WTC11 (cell line): ENCODE measurements at regions of chr14 and their contacts with region 1.

Region 1: GRCh38 chr14:67426983-67427606 is 15.1 kb upstream of the PLEK2 start:
- DNase-seq: peak; percentile 85
- ATAC-seq: peak; percentile 95
- H3K4me3 Mint-ChIP-seq: peak overlapping the region; percentile 20; the same call in 1 of the 2 replicates
- H3K27ac Mint-ChIP-seq: no peak overlapping the region
- H3K4me1 Mint-ChIP-seq: peaks cover 12% of the 10 kb centered on the region
- H3K27me3 Mint-ChIP-seq: peaks cover 3% of the 10 kb centered on the region; the same call in 1 of the 2 replicates
- CTCF ChIP-seq: peak; percentile 75

Region 2: DNA sequence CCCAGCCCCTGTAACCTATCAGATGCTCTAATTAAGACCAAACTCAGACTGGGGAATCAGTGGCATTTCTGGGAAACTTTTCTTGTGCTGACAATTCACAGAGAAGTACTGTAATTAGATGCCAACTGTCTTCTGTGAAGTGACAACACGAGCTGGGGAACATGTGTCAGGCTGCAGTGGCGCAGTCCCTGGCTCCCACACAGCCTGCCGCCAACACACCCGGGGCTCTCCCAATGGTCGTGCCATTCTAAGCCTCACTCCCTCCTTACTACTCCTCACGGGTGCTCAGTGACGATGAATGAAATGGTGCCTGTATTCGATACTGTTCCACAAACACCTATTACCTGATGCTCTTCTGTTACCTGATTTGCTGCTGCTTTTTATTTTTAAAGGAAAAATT is 219.3 kb before region 1 on chr14:
- CTCF ChIA-PET with region 1: no interaction called
- POLR2A ChIA-PET with region 1: no interaction called
- DNase-seq: no peak
- ATAC-seq: no peak
- H3K4me3 Mint-ChIP-seq: no peak overlapping the region
- H3K27ac Mint-ChIP-seq: no peak overlapping the region
- H3K4me1 Mint-ChIP-seq: no peaks in the 10 kb centered on the region
- H3K27me3 Mint-ChIP-seq: no peaks in the 10 kb centered on the region
- CTCF ChIP-seq: no peak

Region 3: GRCh38 chr14:67352055-67352454 is 75.0 kb before region 1 on chr14:
- CTCF ChIA-PET with region 1: no interaction called
- POLR2A ChIA-PET with region 1: no interaction called
- DNase-seq: no peak
- ATAC-seq: no peak
- H3K4me3 Mint-ChIP-seq: no peak overlapping the region
- H3K27ac Mint-ChIP-seq: no peak overlapping the region
- H3K4me1 Mint-ChIP-seq: no peaks in the 10 kb centered on the region
- H3K27me3 Mint-ChIP-seq: no peaks in the 10 kb centered on the region
- CTCF ChIP-seq: no peak

Region 4: GRCh38 chr14:67377916-67378315 is 49.2 kb before region 1 on chr14:
- CTCF ChIA-PET with region 1: no interaction called
- POLR2A ChIA-PET with region 1: no interaction called
- DNase-seq: no peak
- ATAC-seq: no peak
- H3K4me3 Mint-ChIP-seq: no peak overlapping the region
- H3K27ac Mint-ChIP-seq: no peak overlapping the region
- H3K4me1 Mint-ChIP-seq: no peaks in the 10 kb centered on the region
- H3K27me3 Mint-ChIP-seq: no peaks in the 10 kb centered on the region
- CTCF ChIP-seq: no peak

Region 5: DNA sequence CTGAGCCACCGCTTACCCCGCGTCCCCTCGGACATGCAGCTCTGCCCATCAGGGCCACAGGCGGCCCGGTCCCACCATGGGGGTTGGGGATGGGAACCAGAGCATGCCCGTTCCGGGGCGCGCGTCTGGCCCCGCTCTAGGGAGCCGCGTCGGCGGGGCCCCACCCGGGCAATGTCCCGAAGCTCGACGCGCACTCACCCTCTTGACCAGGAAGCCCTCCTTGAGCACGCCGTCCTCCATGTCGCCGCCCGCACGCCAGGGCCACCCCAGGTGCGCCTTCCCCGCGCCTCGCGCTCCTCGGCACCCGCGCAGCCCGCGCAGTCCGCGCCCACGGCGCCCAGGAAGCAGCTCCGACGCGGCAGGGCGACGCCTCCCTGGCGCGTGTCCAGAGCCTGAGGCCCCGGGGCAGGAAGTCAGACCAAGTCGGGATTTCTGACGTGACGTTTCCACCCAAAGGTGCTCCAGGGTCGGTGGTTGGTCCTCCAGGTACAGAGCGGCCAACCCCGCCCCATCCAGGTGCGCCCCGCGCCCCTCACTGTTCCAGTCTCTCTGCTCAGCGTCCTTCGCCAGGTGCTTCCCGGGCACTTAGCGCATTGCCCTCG is 15.2 kb before region 1 on chr14 and contains the start of gene PLEK2:
- CTCF ChIA-PET with region 1: interaction called, 17 read pairs
- POLR2A ChIA-PET with region 1: no interaction called
- DNase-seq: peak; percentile 42
- ATAC-seq: peak; percentile 74
- H3K4me3 Mint-ChIP-seq: peak within 1 kb of the TSS; percentile 70
- H3K27ac Mint-ChIP-seq: no peak within 1 kb of the TSS
- H3K4me1 Mint-ChIP-seq: peaks cover 10% of the 10 kb centered on the region
- H3K27me3 Mint-ChIP-seq: peaks cover 41% of the 10 kb centered on the region
- CTCF ChIP-seq: no peak
- total RNA-seq, gene PLEK2: 1.2 to 1.4 TPM (median 1.3 TPM) in 3 replicates

Region 6: DNA sequence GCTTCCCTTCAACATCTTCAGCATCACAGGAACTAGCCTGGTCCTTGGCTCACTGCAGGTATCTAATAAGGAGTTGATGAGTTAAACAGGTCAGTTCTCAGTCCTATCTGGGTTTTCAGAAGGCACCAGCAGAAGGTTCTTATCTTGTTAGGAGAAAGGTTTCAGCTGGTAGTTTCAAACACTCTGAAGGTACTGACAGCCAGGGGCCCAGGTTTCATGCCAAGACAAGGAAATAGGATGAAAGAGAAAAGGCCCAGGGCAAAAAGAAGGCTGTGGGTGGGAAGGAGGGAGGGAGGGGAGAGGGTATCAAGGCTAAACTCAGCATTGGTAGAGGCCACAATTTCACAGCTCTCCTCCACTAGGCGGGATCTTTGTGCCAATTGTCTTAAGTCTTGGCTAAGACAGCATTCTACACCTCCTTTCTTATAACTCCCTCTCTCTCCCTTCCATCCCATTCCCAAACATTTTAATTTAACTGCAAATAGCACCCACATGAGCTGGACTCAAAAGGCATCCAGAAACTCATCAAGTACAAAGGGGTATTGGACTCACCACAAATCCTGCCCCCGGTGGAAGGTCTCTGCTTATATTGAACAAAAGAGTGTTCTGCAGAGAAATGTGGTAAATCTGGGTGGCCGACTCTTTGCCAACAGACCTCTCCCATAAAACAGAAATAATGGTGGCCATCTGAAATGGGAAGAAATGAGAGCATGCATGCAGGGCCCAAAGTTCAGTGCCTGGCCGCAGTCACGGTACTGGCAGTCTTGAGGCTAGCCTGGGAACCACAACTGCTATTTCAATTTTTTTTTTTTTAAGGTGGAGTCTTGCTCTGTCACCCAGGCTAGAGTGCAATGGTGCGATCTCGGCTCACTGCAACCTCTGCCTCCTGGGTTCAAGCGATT is 40.3 kb after region 1 on chr14:
- CTCF ChIA-PET with region 1: interaction called, 37 read pairs
- POLR2A ChIA-PET with region 1: no interaction called
- DNase-seq: no peak
- ATAC-seq: peak; percentile 44; the same call in 1 of the 2 replicates
- H3K4me3 Mint-ChIP-seq: no peak overlapping the region
- H3K27ac Mint-ChIP-seq: no peak overlapping the region
- H3K4me1 Mint-ChIP-seq: no peaks in the 10 kb centered on the region
- H3K27me3 Mint-ChIP-seq: no peaks in the 10 kb centered on the region; the same call in 1 of the 2 replicates
- CTCF ChIP-seq: no peak

Region 7: GRCh38 chr14:67514650-67515385 is 87.7 kb after region 1 on chr14:
- CTCF ChIA-PET with region 1: interaction called, 62 read pairs
- POLR2A ChIA-PET with region 1: interaction called, 3 read pairs
- DNase-seq: peak; percentile 32
- ATAC-seq: peak; percentile 57
- H3K4me3 Mint-ChIP-seq: peak overlapping the region; percentile 80
- H3K27ac Mint-ChIP-seq: no peak overlapping the region
- H3K4me1 Mint-ChIP-seq: peaks cover 21% of the 10 kb centered on the region
- H3K27me3 Mint-ChIP-seq: peaks cover 77% of the 10 kb centered on the region
- CTCF ChIP-seq: no peak

Region 8: DNA sequence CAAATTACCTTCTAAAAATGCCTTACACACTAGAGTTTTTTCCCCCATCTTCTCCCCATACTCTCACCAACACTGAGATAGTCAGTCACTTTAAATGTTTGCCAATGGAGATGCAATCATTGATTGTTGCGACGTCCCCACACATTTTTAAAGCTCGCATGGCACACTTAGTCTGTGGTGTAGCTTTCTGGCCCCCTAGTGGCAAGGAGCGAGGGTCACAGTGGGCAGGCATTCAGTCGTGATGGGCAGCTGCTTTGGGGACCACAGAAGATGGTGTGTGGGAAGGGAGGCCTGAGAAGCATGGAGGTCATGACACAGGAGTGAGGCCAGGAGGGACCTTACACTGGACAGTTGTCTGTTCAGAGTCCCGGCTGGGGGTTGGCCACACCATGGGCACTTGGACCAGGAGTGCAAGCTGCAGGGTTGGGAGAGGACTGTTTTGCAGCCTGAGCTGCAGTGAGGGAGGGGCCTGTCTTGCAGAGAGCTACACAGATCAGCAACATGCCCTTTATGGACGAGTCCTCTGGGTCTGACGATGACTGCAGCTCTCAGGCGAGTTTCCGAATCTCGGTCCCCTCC is 144.3 kb after region 1 on chr14:
- CTCF ChIA-PET with region 1: interaction called, 117 read pairs
- POLR2A ChIA-PET with region 1: no interaction called
- DNase-seq: peak; percentile 72
- ATAC-seq: peak; percentile 85
- H3K4me3 Mint-ChIP-seq: no peak overlapping the region
- H3K27ac Mint-ChIP-seq: no peak overlapping the region
- H3K4me1 Mint-ChIP-seq: peaks cover 9% of the 10 kb centered on the region
- H3K27me3 Mint-ChIP-seq: no peaks in the 10 kb centered on the region
- CTCF ChIP-seq: peak; percentile 85

Region 9: DNA sequence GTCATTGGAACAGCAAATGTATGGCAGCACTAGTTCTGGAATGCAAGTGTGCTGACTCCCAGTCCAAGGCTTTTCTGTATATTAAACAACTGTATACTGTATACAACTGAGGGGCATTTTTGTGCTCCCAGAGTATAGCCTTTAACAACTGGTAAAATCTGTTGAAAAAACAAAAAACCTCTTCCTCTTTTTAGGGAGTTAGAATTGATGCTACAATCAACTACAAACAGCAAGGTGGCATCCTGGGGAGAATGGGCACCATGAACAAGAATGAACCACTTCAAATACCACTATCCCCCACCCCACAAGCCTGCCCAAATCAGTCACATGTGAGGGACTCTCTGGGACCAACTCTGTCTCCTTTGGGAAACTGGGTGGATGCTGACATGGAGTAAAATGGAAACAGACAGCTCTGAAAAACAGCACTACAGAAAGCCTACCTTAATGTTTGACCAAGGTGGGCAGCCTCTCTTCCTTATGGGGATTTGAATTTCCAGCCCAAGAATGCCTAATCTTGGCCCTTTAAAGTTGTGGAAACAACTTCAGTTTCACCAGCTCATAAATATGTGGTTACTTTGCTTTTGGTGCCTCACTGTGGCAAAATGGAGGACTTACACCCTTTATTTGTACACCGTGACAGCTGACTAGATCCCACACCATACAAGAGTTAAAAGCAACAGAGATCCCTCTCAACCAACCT is 239.8 kb after region 1 on chr14:
- CTCF ChIA-PET with region 1: interaction called, 14 read pairs
- POLR2A ChIA-PET with region 1: no interaction called
- DNase-seq: no peak
- ATAC-seq: peak; percentile 93
- H3K4me3 Mint-ChIP-seq: no peak overlapping the region
- H3K27ac Mint-ChIP-seq: peak overlapping the region; percentile 85
- H3K4me1 Mint-ChIP-seq: peaks cover 13% of the 10 kb centered on the region
- H3K27me3 Mint-ChIP-seq: no peaks in the 10 kb centered on the region
- CTCF ChIP-seq: no peak